ENCODE measurements at regions of chr1 and their contacts with region 1.

Region 1: DNA sequence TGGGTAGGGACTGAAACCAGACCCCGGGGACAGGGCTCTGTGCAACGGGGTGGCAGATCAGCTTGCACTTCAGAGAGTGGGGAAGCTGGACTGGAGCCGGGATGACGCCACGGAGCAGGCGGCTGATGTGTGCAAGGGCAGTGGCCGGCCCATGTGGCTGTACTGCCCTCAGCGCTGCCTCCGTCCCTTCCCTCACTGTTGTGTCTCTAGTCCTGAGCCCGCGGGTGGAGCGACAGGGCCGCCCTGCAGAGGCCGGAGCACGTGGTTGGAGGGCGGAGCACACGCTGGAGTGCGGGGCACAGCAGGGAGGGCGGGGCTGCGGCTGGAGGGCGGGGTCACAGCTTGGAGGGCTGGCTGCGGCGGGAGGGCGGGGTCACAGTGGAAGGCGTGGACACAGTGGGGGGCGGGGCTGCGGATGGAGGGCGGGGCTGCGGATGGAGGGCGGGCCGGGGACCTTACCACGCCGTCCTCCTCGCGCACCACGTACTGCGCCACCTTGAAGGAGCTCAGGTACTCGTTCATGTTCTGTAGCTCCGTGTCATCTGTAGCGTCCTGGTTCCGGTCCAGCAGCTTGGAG is 52.4 kb downstream of the CHD5 start:
- DNase-seq: peak; percentile 23
- ATAC-seq: peak; percentile 95
- H3K4me3 ChIP-seq: no peak overlapping the region
- H3K27ac ChIP-seq: no peak overlapping the region
- H3K4me1 ChIP-seq: no peaks in the 10 kb centered on the region
- H3K27me3 ChIP-seq: peaks cover 2% of the 10 kb centered on the region; the same call in 1 of the 2 replicates
- CTCF ChIP-seq: no peak
- POLR2A ChIP-seq: no peak
- RAD21 ChIP-seq: no peak

Region 2: GRCh38 chr1:7613106-7613850 is 1485.6 kb after region 1 on chr1:
- CTCF ChIA-PET with region 1: no interaction called
- POLR2A ChIA-PET with region 1: interaction called, 10 read pairs
- dilution Hi-C with region 1: no loop called
- in situ Hi-C with region 1: no loop called
- intact Hi-C with region 1: no loop called
- DNase-seq: no peak
- ATAC-seq: no peak
- H3K4me3 ChIP-seq: no peak overlapping the region
- H3K27ac ChIP-seq: no peak overlapping the region
- H3K4me1 ChIP-seq: no peaks in the 10 kb centered on the region
- H3K27me3 ChIP-seq: peaks cover 9% of the 10 kb centered on the region; the same call in 1 of the 2 replicates
- CTCF ChIP-seq: no peak
- POLR2A ChIP-seq: no peak
- RAD21 ChIP-seq: no peak